Sigmoid colon (tissue), 7 donors: ENCODE measurements at regions of chr10 and their contacts with region 1.

Region 1: DNA sequence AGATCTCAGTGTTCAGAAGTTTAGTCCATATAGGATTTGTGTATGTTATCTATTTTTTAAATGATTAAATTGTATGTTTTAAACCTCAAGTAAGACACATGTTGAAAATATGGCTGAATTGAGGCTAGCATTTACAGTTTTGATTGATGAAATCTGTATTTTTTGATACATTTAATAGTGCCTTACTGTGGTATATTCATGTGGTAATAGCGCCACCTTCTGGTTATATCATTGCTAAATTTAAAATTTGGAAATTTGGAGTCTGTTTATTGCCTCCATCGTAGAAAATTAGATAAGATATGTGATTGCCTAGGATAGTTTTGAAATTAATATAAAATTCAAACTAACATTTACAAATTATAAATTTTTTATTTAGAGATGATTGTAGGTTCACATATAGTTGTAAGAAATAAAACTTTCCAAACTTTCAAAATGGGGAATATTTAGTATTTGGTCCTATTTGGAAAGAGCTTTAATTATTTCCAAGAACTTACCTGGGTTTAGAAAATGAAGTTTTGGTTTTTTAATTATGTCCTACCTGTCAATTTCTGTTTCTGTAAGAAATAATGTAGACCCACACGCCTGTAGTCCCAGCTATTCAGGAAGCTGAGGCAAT is 19.1 kb upstream of the ARMS2 start:
- DNase-seq: no peak
- H3K4me3 ChIP-seq: no peak overlapping the region
- H3K27ac ChIP-seq: peak overlapping the region in 1 of 4 donors; percentile 13
- H3K4me1 ChIP-seq: no peaks in the 10 kb centered on the region
- H3K27me3 ChIP-seq: no peaks in the 10 kb centered on the region
- CTCF ChIP-seq: peak; percentile 50 to 68 (median 60)
- EP300 ChIP-seq: no peak
- POLR2A ChIP-seq: no peak

Region 2: DNA sequence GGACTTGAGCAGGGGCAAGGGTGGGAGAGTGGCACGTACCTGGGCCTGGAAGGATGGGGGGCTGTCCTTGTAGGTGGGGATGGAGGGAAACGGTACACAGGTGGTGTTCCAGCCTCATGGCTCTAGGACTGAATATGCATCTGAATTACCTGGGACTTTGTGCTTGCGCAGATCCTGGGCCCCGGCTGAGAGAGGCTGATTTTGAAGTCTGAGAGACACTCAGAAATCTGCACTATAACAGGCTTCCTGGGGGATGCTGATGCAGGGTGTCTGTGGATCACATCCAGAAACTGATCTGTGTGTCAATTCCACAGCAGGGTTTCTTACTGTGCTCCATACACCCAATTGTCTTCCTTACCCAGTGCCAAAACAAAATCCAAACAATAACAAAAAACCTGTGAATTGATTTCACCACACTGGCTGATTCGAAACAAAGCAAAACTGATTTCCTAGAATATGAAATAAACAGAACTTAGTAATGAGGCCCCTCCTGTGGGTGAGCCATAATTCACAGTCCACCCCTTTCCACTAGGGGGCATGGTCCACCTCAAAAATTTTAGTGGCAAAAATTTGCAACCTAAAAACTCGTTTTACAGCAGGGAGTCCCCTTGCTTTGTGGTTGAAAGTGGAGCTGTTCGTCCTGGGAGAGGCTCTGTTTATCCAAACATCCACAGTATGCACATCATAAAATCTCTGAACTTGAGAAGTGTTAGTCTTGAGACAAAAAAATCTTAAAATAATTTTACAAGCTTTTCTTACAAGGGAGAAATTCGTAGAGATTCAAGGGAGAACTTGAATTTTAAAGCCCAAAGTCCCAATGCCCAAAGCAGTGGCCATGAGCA is 92.8 kb before region 1 on chr10:
- intact Hi-C with region 1: loop called (anchors 2 kb)
- DNase-seq: no peak
- H3K4me3 ChIP-seq: no peak overlapping the region
- H3K27ac ChIP-seq: peak overlapping the region; percentile 51 to 87 (median 75)
- H3K4me1 ChIP-seq: peaks cover 0 to 55% (median 37%) of the 10 kb centered on the region in 4 donors
- H3K27me3 ChIP-seq: no peaks in the 10 kb centered on the region
- CTCF ChIP-seq: peak; percentile 51 to 78 (median 72)
- EP300 ChIP-seq: no peak
- POLR2A ChIP-seq: no peak

Region 3: GRCh38 chr10:122368502-122369256 is 66.6 kb before region 1 on chr10:
- intact Hi-C with region 1: no loop called
- DNase-seq: no peak
- H3K4me3 ChIP-seq: no peak overlapping the region
- H3K27ac ChIP-seq: no peak overlapping the region
- H3K4me1 ChIP-seq: peaks cover 0 to 43% (median 35%) of the 10 kb centered on the region in 4 donors
- H3K27me3 ChIP-seq: no peaks in the 10 kb centered on the region
- CTCF ChIP-seq: no peak
- EP300 ChIP-seq: no peak
- POLR2A ChIP-seq: no peak